ENCODE measurements at regions of chr19 and their contacts with region 1.

Region 1: GRCh38 chr19:49676690-49677231 is 310 bp upstream of the PRMT1 start:
- DNase-seq: peak; percentile 100
- ATAC-seq: peak; percentile 77
- H3K4me3 Mint-ChIP-seq: peak overlapping the region; percentile 94
- H3K27ac Mint-ChIP-seq: peak overlapping the region; percentile 99
- H3K4me1 Mint-ChIP-seq: peaks cover 39% of the 10 kb centered on the region
- H3K27me3 Mint-ChIP-seq: no peaks in the 10 kb centered on the region

Region 2: DNA sequence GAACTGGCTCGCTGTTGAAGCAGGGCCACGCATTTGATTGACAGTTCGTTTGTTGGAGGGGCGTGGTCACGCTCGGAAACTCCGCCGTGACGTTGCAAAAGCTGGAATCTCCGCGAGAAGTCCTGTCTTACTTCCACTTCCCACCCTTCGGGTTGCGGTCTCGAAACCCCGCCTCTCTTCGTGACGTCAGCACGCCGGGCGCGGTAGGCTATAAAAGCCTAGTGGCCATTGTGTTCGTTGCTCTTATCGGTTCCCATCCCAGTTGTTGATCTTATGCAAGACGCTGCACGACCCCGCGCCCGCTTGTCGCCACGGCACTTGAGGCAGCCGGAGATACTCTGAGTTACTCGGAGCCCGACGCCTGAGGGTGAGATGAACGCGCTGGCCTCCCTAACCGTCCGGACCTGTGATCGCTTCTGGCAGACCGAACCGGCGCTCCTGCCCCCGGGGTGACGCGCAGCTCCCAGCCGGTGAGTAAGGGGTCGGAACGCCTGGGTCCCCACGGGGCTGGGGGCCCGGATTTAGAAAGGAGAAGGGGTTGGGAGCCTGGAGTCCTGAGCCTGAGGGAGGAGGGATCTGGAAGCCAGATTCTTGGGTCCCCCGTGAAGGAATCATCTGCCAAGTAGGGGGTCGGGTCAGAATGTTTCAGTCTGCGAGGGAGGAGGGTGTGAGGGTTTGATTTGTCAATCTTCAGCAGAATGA is 804.4 kb before region 1 on chr19 and contains the start of gene PPP1R15A:
- CTCF ChIA-PET with region 1: no interaction called
- POLR2A ChIA-PET with region 1: no interaction called
- intact Hi-C with region 1: loop called in 1 of 2 experiments (anchors 10 kb)
- DNase-seq: peak; percentile 99
- ATAC-seq: peak; percentile 50
- H3K4me3 Mint-ChIP-seq: peak within 1 kb of the TSS; percentile 98
- H3K27ac Mint-ChIP-seq: peak within 1 kb of the TSS; percentile 99
- H3K4me1 Mint-ChIP-seq: peaks cover 41% of the 10 kb centered on the region
- H3K27me3 Mint-ChIP-seq: no peaks in the 10 kb centered on the region
- total RNA-seq, gene PPP1R15A: 51.6 to 62.4 TPM

Region 3: DNA sequence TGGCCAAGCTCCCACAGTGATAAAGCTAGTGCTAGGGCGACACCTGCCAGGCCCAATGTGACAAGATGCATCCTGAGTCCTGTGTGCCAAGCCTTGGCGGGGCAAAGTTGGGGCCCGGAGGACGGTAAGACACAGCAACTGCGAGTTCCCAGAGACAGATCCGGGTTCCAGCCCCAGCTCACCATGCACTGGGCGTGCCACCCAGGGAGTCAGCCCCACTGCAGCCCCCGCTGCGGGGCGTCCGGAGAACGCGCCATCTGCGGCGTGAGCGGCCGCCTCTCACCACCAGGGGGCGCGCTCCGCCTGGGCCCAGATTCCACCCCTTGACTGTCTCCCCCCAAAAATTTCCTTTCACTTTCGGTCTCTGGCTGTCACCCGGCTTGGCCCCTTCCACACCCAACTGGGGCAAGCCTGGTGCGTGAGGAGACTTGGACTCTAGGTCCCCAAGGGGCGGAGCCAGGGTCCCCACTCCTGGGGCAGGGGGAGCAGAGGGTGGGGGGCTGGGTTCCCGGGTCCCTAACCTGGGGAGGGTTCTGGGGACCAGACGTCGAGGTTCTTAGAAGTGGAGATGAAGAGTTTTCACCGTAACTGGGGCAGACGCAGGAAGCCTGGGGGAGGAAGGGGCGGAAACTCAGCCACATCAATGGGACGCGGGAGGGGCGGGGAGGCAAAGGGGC is 202.8 kb before region 1 on chr19 and contains the start of gene FLT3LG:
- CTCF ChIA-PET with region 1: interaction called, 4 read pairs
- POLR2A ChIA-PET with region 1: interaction called, 3 read pairs
- intact Hi-C with region 1: loop called in 1 of 2 experiments (anchors 1 kb)
- DNase-seq: peak; percentile 94
- ATAC-seq: peak; percentile 47
- H3K4me3 Mint-ChIP-seq: peak within 1 kb of the TSS; percentile 73
- H3K27ac Mint-ChIP-seq: peak within 1 kb of the TSS; percentile 84
- H3K4me1 Mint-ChIP-seq: peaks cover 58% of the 10 kb centered on the region
- H3K27me3 Mint-ChIP-seq: no peaks in the 10 kb centered on the region
- total RNA-seq, gene FLT3LG: 38.6 to 43.2 TPM

Region 4: GRCh38 chr19:49570138-49570856 is 106.5 kb before region 1 on chr19:
- CTCF ChIA-PET with region 1: interaction called, 10 read pairs
- POLR2A ChIA-PET with region 1: no interaction called
- intact Hi-C with region 1: loop called (anchors 1 to 5 kb)
- DNase-seq: peak; percentile 82
- ATAC-seq: peak; percentile 54
- H3K4me3 Mint-ChIP-seq: peak overlapping the region; percentile 16
- H3K27ac Mint-ChIP-seq: peak overlapping the region; percentile 76
- H3K4me1 Mint-ChIP-seq: peaks cover 56% of the 10 kb centered on the region
- H3K27me3 Mint-ChIP-seq: no peaks in the 10 kb centered on the region

Region 5: DNA sequence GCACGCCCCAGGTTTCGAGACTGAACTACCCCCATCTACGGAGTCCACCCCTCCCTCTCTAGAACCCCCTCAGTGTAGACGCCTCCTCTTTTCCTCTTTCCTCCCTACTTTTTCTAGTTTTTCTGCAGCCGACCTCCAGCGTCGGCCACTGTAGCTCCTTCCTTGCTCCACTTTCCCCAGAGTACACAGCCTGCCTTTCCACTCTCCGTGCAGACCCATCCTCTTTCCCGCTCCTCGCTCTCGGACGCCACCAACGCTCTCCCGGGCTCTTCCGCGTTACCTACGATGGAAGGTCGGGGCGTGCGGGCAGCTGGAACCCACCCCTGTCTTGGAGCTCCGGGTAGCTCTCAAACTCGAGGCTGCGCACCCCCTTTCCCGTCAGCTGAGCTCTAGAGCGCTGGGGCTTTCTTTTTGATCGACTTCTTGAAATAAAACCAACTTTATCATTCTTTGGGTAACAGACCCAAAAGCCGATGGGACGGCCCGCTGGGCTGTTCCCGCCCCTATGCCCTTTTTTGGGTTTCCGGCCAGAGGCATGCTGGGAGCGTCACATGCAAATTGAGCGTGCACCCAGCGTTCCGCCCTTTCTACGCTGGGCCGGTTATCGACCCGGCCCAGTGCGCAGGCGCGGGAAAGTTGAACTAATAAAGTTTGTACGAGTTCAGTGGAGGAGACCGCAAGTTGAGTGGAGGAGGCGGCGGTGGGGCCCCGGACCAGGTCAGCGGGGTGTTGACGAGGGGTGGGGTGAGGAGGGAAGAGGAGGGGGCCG is 11.2 kb before region 1 on chr19 and contains the starts of genes BCL2L12 and IRF3:
- CTCF ChIA-PET with region 1: interaction called, 18 read pairs
- POLR2A ChIA-PET with region 1: interaction called, 7 read pairs
- intact Hi-C with region 1: loop called (anchors 1 kb)
- DNase-seq: peak; percentile 100
- ATAC-seq: peak; percentile 86
- H3K4me3 Mint-ChIP-seq: peak within 1 kb of the TSS; percentile 96
- H3K27ac Mint-ChIP-seq: peak within 1 kb of the TSS; percentile 92
- H3K4me1 Mint-ChIP-seq: peaks cover 29% of the 10 kb centered on the region
- H3K27me3 Mint-ChIP-seq: no peaks in the 10 kb centered on the region
- total RNA-seq, gene BCL2L12: 79.6 to 93.8 TPM
- total RNA-seq, gene IRF3: 123 to 125 TPM

Region 6: GRCh38 chr19:49850473-49851342 is 173.9 kb after region 1 on chr19 and contains the start of gene PTOV1:
- CTCF ChIA-PET with region 1: interaction called, 3 read pairs
- POLR2A ChIA-PET with region 1: interaction called, 3 read pairs
- intact Hi-C with region 1: loop called in 1 of 2 experiments (anchors 1 kb)
- DNase-seq: peak; percentile 95
- ATAC-seq: peak; percentile 91
- H3K4me3 Mint-ChIP-seq: peak within 1 kb of the TSS; percentile 85
- H3K27ac Mint-ChIP-seq: peak within 1 kb of the TSS; percentile 91
- H3K4me1 Mint-ChIP-seq: peaks cover 36% of the 10 kb centered on the region
- H3K27me3 Mint-ChIP-seq: no peaks in the 10 kb centered on the region
- total RNA-seq, gene PTOV1: 76.9 to 104 TPM

Region 7: DNA sequence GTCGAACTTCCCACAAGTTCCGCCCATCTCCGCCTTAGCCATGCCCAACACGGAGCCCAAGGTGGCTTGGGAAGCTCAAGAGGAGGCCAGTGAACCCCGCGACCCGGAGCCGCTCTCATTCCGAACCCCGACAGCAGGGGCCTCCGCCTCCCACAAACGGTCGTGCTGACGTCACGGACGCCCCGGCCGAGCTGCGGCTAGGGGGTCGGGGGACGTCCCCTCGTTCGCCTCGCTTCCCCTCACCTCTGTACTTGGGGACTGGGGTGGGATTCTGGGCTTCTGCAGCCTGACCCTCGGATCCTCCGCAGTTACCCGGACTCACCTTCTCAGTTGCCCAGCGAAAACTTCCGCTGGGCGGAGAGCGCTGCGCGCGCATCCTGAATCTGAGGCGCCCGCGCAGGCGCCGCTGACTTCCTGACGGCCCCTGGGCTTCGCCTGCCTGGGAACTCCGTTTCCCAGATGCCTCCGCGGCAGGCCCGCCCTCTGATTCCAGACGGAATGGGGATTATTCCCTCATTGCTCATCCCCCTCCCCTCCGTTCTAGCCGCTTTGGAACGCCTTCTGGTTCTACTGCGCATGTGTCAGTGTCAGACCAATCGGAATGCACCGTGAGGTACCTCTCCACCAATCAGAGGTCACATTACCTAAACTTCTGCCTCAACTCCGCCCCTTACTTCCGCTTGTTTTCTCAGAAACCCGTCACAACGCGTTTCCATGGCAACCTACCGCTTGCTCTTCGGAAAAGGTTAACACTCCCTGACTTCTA is 348.4 kb after region 1 on chr19 and contains the start of gene VRK3:
- CTCF ChIA-PET with region 1: no interaction called
- POLR2A ChIA-PET with region 1: no interaction called
- intact Hi-C with region 1: loop called in 1 of 2 experiments (anchors 1 kb)
- DNase-seq: peak; percentile 98
- ATAC-seq: peak; percentile 91
- H3K4me3 Mint-ChIP-seq: peak within 1 kb of the TSS; percentile 85
- H3K27ac Mint-ChIP-seq: peak within 1 kb of the TSS; percentile 95
- H3K4me1 Mint-ChIP-seq: peaks cover 44% of the 10 kb centered on the region
- H3K27me3 Mint-ChIP-seq: no peaks in the 10 kb centered on the region
- total RNA-seq, gene VRK3: 52.4 to 61.2 TPM